PC-9 (cell line): ENCODE measurements at regions of chr9 and their contacts with region 1.

Region 1: DNA sequence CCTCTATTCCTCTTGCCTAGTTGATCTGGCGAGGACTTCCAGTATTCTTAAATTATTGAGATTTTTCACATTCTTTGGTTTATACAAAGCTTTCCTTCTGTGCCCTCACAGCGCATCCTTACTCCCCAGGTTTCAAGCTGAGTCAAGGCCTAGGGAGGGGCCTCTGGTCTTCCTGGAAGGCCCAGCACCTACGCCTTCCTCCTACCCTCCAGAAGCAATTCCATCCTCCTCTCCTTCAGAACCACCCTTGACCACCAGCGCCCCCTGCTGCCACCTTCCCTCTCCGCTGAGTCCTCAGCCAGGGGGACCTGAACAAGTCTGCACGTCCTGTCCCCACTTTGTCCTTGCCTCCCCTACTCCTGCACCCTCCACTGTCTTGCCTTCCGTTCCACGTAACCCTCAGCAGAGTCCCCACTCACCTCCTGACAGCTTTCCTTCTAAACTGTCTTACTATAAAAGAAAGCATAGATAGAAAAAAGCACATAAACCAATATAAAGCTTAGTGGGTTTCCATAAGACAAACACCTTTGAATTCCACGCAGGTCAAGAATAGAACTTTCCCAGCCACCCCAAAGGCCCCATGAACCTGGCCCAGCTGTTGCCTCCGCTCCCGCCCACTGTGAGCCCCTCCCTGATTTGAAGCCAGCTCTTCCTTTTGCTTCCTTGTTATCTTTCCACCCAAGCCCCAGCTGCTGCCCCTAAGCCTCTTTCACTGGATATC is 63.0 kb upstream of the CTSL start:
- DNase-seq: peak; percentile 78 to 92
- H3K4me3 ChIP-seq: no peak overlapping the region
- H3K27ac ChIP-seq: no peak overlapping the region
- H3K4me1 ChIP-seq: peaks cover 4% of the 10 kb centered on the region; the same call in 1 of the 2 replicates
- H3K27me3 ChIP-seq: no peaks in the 10 kb centered on the region
- CTCF ChIP-seq: peak; percentile 83

Region 2: GRCh38 chr9:86486891-86487837 is 1175.8 kb before region 1 on chr9:
- CTCF ChIA-PET with region 1: no interaction called
- POLR2A ChIA-PET with region 1: no interaction called
- intact Hi-C with region 1: loop called (anchors 5 kb)
- DNase-seq: peak in 1 of 2 experiments; percentile 54
- H3K4me3 ChIP-seq: no peak overlapping the region
- H3K27ac ChIP-seq: no peak overlapping the region
- H3K4me1 ChIP-seq: 0 out of 2 replicates have a peak, but pooled peaks cover 6% of the 10 kb centered on the region
- H3K27me3 ChIP-seq: no peaks in the 10 kb centered on the region
- CTCF ChIP-seq: peak; percentile 85

Region 3: GRCh38 chr9:87405677-87406542 is 257.1 kb before region 1 on chr9:
- CTCF ChIA-PET with region 1: no interaction called
- POLR2A ChIA-PET with region 1: no interaction called
- intact Hi-C with region 1: loop called (anchors 5 kb)
- DNase-seq: peak in 1 of 2 experiments; percentile 65
- H3K4me3 ChIP-seq: peak overlapping the region; percentile 2; the same call in 1 of the 2 replicates
- H3K27ac ChIP-seq: peak overlapping the region; percentile 69
- H3K4me1 ChIP-seq: peaks cover 53% of the 10 kb centered on the region
- H3K27me3 ChIP-seq: no peaks in the 10 kb centered on the region
- CTCF ChIP-seq: no peak

Region 4: DNA sequence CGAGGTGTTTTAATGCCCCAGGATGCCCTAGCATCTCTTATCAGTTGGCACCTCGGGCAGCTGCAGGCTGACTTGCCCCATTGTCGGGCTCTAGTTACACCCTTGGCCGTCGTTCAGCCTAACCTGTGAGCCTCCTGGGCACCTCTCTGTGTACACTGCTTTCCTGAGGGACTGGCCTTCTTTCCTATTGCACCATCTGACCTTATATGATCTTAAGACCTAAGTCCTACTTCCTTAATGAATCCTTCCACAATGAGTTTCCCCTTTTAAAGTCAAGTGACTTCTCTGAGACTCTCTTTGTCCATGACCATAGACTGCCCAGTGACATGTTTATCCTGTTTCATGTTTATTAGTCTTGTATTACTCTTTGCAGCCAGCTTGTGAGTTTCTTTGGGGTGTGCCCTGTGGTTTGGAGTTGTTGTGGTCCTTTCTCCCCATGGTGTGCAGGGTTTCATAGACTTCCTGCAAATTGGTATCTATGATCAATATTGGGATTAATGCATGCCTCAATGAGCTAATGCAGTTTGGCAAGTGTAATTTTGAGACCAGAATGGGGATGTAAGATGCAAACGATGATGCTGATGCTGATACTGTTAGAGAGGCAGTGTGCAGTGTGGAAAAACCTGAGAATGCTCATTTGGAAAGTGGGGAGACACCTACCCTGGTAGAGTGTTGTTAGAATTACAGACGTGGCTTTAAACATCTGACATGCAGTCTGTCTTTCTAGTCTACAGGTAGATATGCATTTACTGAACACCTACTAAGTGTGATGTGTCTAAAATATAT is 160.3 kb before region 1 on chr9:
- CTCF ChIA-PET with region 1: interaction called, 6 read pairs
- POLR2A ChIA-PET with region 1: no interaction called
- intact Hi-C with region 1: loop called (anchors 1 kb)
- DNase-seq: peak; percentile 82 to 98
- H3K4me3 ChIP-seq: peak overlapping the region; percentile 29; the same call in 1 of the 2 replicates
- H3K27ac ChIP-seq: peak overlapping the region; percentile 83
- H3K4me1 ChIP-seq: peaks cover 81% of the 10 kb centered on the region
- H3K27me3 ChIP-seq: no peaks in the 10 kb centered on the region
- CTCF ChIP-seq: no peak

Region 5: GRCh38 chr9:87535817-87536539 is 127.0 kb before region 1 on chr9:
- CTCF ChIA-PET with region 1: no interaction called
- POLR2A ChIA-PET with region 1: no interaction called
- intact Hi-C with region 1: no loop called
- DNase-seq: no peak
- H3K4me3 ChIP-seq: no peak overlapping the region
- H3K27ac ChIP-seq: no peak overlapping the region
- H3K4me1 ChIP-seq: no peaks in the 10 kb centered on the region
- H3K27me3 ChIP-seq: no peaks in the 10 kb centered on the region
- CTCF ChIP-seq: no peak

Region 6: DNA sequence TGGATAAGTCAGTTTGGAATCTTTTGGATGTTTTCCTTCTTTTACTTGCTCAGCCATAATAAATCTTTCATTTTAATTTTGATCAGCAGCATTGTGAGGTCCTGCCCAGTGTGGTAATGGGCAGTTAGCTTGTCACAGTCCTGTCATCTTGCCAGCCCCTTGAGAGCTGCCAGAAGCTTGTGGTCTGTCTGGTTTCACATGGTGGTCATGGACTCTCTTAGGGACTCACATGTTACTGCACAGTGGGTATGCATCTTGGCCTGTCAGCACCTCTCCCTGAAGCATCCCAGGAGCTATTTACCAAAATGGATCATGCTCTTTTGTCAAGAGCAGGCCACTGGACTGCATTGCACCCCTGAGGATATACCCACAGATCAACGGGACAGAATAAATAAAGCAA is 105.0 kb before region 1 on chr9:
- CTCF ChIA-PET with region 1: no interaction called
- POLR2A ChIA-PET with region 1: no interaction called
- intact Hi-C with region 1: no loop called
- DNase-seq: no peak
- H3K4me3 ChIP-seq: no peak overlapping the region
- H3K27ac ChIP-seq: no peak overlapping the region
- H3K4me1 ChIP-seq: 0 out of 2 replicates have a peak, but pooled peaks cover under 1% of the 10 kb centered on the region
- H3K27me3 ChIP-seq: no peaks in the 10 kb centered on the region
- CTCF ChIP-seq: no peak

Region 7: DNA sequence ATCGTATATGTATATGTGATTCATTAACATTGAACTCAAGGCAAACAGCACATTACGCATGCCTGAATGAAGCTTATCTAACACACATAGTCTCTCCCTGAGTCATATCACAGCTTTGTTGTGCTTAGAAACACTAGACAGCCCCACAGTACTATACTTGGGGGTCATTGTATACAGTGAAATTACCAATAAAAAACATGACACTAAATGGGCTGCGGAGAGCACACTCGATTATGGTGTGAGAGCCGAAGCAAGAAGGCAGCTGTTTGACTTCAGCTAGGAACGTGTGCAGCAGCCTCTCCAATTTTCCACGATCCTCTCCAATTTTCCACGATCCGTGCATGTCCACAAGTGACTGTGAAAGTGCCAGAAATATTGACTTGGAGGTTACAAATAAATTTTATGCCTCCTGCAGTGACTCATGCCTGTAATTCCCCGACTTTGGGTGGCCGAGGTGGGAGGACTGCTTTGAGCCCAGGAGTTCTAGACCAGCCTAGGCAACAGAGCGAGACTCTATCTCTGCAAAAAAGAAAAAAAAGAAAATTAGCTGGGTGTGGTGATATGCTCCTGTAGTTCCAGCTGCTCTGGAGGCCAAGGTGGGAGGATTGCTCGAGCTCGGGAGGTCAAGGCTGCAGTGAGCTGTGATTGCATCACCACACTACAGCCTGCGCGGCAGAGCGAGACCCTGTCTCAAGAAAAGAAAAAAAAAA is 62.9 kb before region 1 on chr9:
- CTCF ChIA-PET with region 1: no interaction called
- POLR2A ChIA-PET with region 1: no interaction called
- intact Hi-C with region 1: loop called (anchors 2 kb)
- DNase-seq: peak; percentile 43 to 96
- H3K4me3 ChIP-seq: peak overlapping the region; percentile 22; the same call in 1 of the 2 replicates
- H3K27ac ChIP-seq: peak overlapping the region; percentile 56
- H3K4me1 ChIP-seq: peaks cover 52% of the 10 kb centered on the region
- H3K27me3 ChIP-seq: no peaks in the 10 kb centered on the region
- CTCF ChIP-seq: no peak

Region 8: DNA sequence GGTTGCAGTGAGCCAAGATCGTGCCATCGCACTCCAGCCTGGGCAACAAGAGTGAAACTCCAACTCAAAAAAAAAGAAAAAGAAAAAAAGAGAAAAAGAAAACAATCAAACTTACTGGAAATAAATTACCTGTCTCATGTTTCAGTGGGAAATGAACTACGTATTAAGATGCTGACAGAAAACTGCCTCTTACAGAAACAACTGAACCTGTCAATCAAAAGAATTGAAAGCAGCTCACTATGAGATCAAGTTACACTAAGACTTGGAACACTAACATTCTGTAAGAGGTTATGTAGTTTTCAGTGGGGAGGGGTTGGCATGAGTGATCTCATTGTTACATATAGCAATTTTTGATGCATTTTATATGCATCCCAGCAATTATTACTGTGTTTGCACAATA is 155.3 kb after region 1 on chr9:
- CTCF ChIA-PET with region 1: no interaction called
- POLR2A ChIA-PET with region 1: no interaction called
- intact Hi-C with region 1: no loop called
- DNase-seq: no peak
- H3K4me3 ChIP-seq: no peak overlapping the region
- H3K27ac ChIP-seq: no peak overlapping the region
- H3K4me1 ChIP-seq: no peaks in the 10 kb centered on the region
- H3K27me3 ChIP-seq: no peaks in the 10 kb centered on the region
- CTCF ChIP-seq: no peak